CD4-positive, alpha-beta T cell (primary cell): ENCODE measurements at regions of chr15 and their contacts with region 1.

Region 1: GRCh38 chr15:63677730-63678129 is 80.5 kb downstream of the FBXL22 start:
- DNase-seq: no peak
- ATAC-seq: no peak
- H3K4me3 ChIP-seq: no peak overlapping the region
- H3K4me3 Mint-ChIP-seq: no peak overlapping the region
- H3K27ac ChIP-seq: no peak overlapping the region
- H3K27ac Mint-ChIP-seq: peak overlapping the region; percentile 25
- H3K4me1 ChIP-seq: peaks cover 4% of the 10 kb centered on the region
- H3K4me1 Mint-ChIP-seq: peaks cover 24% of the 10 kb centered on the region
- H3K27me3 ChIP-seq: no peaks in the 10 kb centered on the region
- H3K27me3 Mint-ChIP-seq: no peaks in the 10 kb centered on the region
- CTCF ChIP-seq: no peak

Region 2: DNA sequence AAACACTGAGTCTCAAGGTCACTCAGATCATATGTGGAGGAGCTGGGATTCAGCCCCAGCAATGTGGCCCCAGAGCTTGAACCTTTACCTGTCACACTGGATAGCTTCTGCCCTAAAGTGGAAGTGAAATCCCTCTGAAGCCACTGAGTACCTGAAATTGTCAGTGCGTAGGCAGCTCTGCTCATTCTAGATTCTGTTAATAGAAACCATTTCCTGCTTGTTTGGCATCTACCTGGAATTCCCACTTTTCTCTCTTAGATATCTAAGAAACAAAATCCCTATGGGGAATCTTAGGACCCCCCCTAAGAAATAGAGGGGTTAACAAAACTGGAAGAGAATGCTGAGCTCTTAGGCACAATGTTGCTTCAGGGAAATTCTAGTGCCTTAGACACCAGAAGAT is 50.8 kb before region 1 on chr15:
- CTCF ChIA-PET with region 1: no interaction called
- POLR2A ChIA-PET with region 1: no interaction called
- intact Hi-C with region 1: loop called in 1 of 2 experiments (anchors 10 kb)
- DNase-seq: no peak
- ATAC-seq: no peak
- H3K4me3 ChIP-seq: no peak overlapping the region
- H3K4me3 Mint-ChIP-seq: no peak overlapping the region
- H3K27ac ChIP-seq: no peak overlapping the region
- H3K27ac Mint-ChIP-seq: no peak overlapping the region
- H3K4me1 ChIP-seq: no peaks in the 10 kb centered on the region
- H3K4me1 Mint-ChIP-seq: no peaks in the 10 kb centered on the region
- H3K27me3 ChIP-seq: no peaks in the 10 kb centered on the region
- H3K27me3 Mint-ChIP-seq: no peaks in the 10 kb centered on the region
- CTCF ChIP-seq: no peak

Region 3: DNA sequence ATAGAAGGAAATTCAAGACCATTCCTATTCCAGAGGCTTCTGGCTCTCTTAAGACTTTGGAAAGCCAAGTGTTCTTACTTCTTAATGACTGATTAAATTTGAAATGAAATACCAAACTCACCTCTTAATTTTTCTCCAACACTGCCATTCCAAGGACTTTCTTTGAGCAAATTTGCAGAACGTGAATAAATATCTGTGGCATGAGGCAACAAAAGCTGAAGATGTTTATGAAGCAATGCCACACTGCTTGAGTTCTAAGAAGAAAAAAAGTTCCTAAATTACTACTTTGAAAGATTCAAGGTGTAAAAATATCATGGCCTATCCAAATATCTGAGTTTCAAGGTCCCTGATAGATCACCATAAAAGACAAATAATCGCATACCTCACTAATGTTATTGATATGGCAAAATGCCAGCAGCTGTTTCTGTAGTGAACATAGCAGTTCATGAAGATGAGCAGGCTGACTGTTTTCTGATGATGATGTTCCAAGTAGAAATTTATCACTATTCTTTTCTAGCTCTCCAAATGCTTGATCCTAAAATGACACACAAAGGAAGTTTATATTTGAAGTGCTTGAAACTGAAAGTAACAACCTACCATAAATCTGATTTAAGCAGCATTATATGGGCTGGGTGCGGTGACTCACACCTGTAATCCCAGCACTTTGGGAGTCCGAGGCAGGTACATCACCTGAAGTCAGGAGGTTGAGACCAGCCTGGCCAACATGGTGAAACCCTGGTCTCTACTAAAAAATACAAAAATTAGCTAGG is 51.6 kb after region 1 on chr15:
- CTCF ChIA-PET with region 1: no interaction called
- POLR2A ChIA-PET with region 1: no interaction called
- intact Hi-C with region 1: loop called in 1 of 2 experiments (anchors 5 kb)
- DNase-seq: no peak
- ATAC-seq: no peak
- H3K4me3 ChIP-seq: no peak overlapping the region
- H3K4me3 Mint-ChIP-seq: no peak overlapping the region
- H3K27ac ChIP-seq: no peak overlapping the region
- H3K27ac Mint-ChIP-seq: peak overlapping the region; percentile 58
- H3K4me1 ChIP-seq: no peaks in the 10 kb centered on the region
- H3K4me1 Mint-ChIP-seq: peaks cover 20% of the 10 kb centered on the region
- H3K27me3 ChIP-seq: no peaks in the 10 kb centered on the region
- H3K27me3 Mint-ChIP-seq: no peaks in the 10 kb centered on the region
- CTCF ChIP-seq: no peak